ENCODE measurements at regions of chr4 and their contacts with region 1.

Region 1: DNA sequence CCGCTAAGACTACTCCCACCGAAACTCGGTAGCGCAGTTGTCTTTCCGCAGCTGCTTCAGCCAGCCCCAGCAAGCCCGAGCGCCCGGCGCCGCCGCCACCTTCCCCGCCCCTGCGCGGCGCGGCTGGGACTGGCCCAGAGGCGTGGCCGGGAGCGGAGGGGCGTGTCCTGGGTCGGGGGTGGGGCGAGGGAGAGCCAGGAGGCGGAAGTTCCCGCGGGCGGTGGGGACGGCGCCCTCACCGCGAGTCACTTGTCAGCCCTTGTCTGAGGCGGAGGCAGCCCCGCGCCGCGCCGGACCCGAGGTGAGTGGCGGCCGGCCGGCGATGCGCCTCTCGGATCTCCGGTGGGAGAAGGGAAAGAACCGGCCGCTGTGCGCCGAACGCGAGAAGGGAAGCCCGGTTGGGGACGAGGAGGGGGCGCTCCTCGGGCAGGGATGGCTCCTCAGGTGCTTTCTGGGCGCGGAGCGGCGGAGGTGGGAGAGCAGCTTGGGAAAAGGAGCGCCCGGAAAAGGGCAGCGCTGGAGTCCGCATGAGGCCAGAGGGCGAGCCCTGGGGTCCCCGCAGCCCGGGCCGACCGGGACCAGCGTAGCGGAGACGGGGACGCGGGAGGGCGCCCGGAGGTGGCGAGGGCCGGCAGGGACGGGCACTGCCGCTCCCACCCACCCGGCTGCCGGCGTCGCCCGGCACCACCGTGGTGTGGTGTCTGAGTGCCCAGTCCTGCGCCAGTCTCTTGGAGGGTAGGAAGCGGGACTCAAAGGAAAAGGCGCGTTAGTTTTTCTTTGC is at the start of gene PDLIM5:
- DNase-seq: peak; percentile 84
- ATAC-seq: peak; percentile 92
- H3K4me3 ChIP-seq: peak within 1 kb of the TSS; percentile 99
- H3K27ac ChIP-seq: peak within 1 kb of the TSS; percentile 93
- H3K4me1 ChIP-seq: peaks cover 7% of the 10 kb centered on the region
- H3K27me3 ChIP-seq: no peaks in the 10 kb centered on the region
- CTCF ChIP-seq: no peak
- POLR2A ChIP-seq: peak; percentile 96
- RAD21 ChIP-seq: peak; percentile 8
- total RNA-seq, gene PDLIM5: 159 and 188 TPM in 2 replicates

Region 2: GRCh38 chr4:94399721-94400120 is 52.2 kb before region 1 on chr4:
- CTCF ChIA-PET with region 1: no interaction called
- POLR2A ChIA-PET with region 1: no interaction called
- dilution Hi-C with region 1: no loop called
- in situ Hi-C with region 1: no loop called
- intact Hi-C with region 1: no loop called
- DNase-seq: no peak
- ATAC-seq: no peak
- H3K4me3 ChIP-seq: no peak overlapping the region
- H3K27ac ChIP-seq: no peak overlapping the region
- H3K4me1 ChIP-seq: no peaks in the 10 kb centered on the region
- H3K27me3 ChIP-seq: peaks cover 3% of the 10 kb centered on the region
- CTCF ChIP-seq: no peak
- POLR2A ChIP-seq: no peak
- RAD21 ChIP-seq: no peak

Region 3: GRCh38 chr4:94441838-94442237 is 10.0 kb before region 1 on chr4:
- CTCF ChIA-PET with region 1: no interaction called
- POLR2A ChIA-PET with region 1: interaction called, 20 read pairs
- dilution Hi-C with region 1: no loop called
- in situ Hi-C with region 1: no loop called
- intact Hi-C with region 1: no loop called
- DNase-seq: no peak
- ATAC-seq: no peak
- H3K4me3 ChIP-seq: no peak overlapping the region
- H3K27ac ChIP-seq: no peak overlapping the region
- H3K4me1 ChIP-seq: no peaks in the 10 kb centered on the region
- H3K27me3 ChIP-seq: no peaks in the 10 kb centered on the region
- CTCF ChIP-seq: no peak
- POLR2A ChIP-seq: no peak
- RAD21 ChIP-seq: no peak

Region 4: GRCh38 chr4:94516067-94516466 is 64.2 kb after region 1 on chr4:
- CTCF ChIA-PET with region 1: no interaction called
- POLR2A ChIA-PET with region 1: no interaction called
- dilution Hi-C with region 1: no loop called
- in situ Hi-C with region 1: no loop called
- intact Hi-C with region 1: loop called (anchors 2 kb)
- DNase-seq: peak; percentile 95
- ATAC-seq: peak; percentile 89
- H3K4me3 ChIP-seq: no peak overlapping the region
- H3K27ac ChIP-seq: peak overlapping the region; percentile 93; the same call in 1 of the 2 replicates
- H3K4me1 ChIP-seq: peaks cover 14% of the 10 kb centered on the region
- H3K27me3 ChIP-seq: no peaks in the 10 kb centered on the region
- CTCF ChIP-seq: no peak
- POLR2A ChIP-seq: peak; percentile 25; the same call in 1 of the 2 replicates
- RAD21 ChIP-seq: no peak; the same call in 1 of the 2 replicates

Region 5: GRCh38 chr4:94577136-94577535 is 125.3 kb after region 1 on chr4:
- CTCF ChIA-PET with region 1: no interaction called
- POLR2A ChIA-PET with region 1: no interaction called
- dilution Hi-C with region 1: no loop called
- in situ Hi-C with region 1: no loop called
- intact Hi-C with region 1: loop called (anchors 5 kb)
- DNase-seq: peak; percentile 67
- ATAC-seq: peak; percentile 57; the same call in 1 of the 2 replicates
- H3K4me3 ChIP-seq: no peak overlapping the region
- H3K27ac ChIP-seq: no peak overlapping the region
- H3K4me1 ChIP-seq: peaks cover 17% of the 10 kb centered on the region
- H3K27me3 ChIP-seq: no peaks in the 10 kb centered on the region
- CTCF ChIP-seq: no peak
- POLR2A ChIP-seq: no peak
- RAD21 ChIP-seq: no peak

Region 6: GRCh38 chr4:94595879-94596483 is 144.1 kb after region 1 on chr4:
- CTCF ChIA-PET with region 1: no interaction called
- POLR2A ChIA-PET with region 1: no interaction called
- dilution Hi-C with region 1: no loop called
- in situ Hi-C with region 1: no loop called
- intact Hi-C with region 1: loop called (anchors 2 kb)
- DNase-seq: peak; percentile 74
- ATAC-seq: peak; percentile 79; the same call in 1 of the 2 replicates
- H3K4me3 ChIP-seq: no peak overlapping the region
- H3K27ac ChIP-seq: no peak overlapping the region
- H3K4me1 ChIP-seq: no peaks in the 10 kb centered on the region
- H3K27me3 ChIP-seq: no peaks in the 10 kb centered on the region
- CTCF ChIP-seq: peak; percentile 74
- POLR2A ChIP-seq: no peak
- RAD21 ChIP-seq: peak; percentile 87